CD8-positive, alpha-beta T cell (primary cell): ENCODE measurements at regions of chr15 and their contacts with region 1.

Region 1: GRCh38 chr15:59741274-59741906 is 52.3 kb upstream of the BNIP2 start:
- DNase-seq: peak in 2 of 9 experiments; percentile 17 to 33
- ATAC-seq: no peak
- H3K4me3 ChIP-seq: no peak overlapping the region
- H3K4me3 Mint-ChIP-seq: no peak overlapping the region
- H3K27ac ChIP-seq: no peak overlapping the region
- H3K27ac Mint-ChIP-seq: no peak overlapping the region
- H3K4me1 ChIP-seq: no peaks in the 10 kb centered on the region
- H3K4me1 Mint-ChIP-seq: no peaks in the 10 kb centered on the region
- H3K27me3 ChIP-seq: no peaks in the 10 kb centered on the region
- H3K27me3 Mint-ChIP-seq: peaks cover 10% of the 10 kb centered on the region
- CTCF ChIP-seq: no peak

Region 2: DNA sequence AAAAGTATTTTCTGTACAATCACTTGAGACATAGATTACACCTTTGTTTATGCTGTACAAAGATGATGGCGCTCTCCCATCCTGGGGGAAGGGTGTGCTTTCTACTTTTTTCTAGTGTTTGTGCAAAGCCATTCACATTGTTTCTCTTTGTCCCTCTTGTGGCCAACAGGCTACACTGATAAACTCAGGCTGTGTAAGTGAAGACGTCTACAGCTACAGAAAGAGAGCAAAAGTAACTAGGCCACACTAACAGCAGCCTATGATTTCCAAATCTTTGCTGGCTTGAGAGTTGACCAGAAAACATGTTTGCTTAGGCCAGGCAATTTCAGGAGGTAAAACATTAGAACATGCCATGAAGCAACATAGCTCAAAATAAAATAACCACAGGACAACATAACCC is 337.8 kb after region 1 on chr15:
- CTCF ChIA-PET with region 1: no interaction called
- POLR2A ChIA-PET with region 1: no interaction called
- intact Hi-C with region 1: no loop called
- DNase-seq: no peak
- ATAC-seq: no peak
- H3K4me3 ChIP-seq: no peak overlapping the region
- H3K4me3 Mint-ChIP-seq: no peak overlapping the region
- H3K27ac ChIP-seq: no peak overlapping the region
- H3K27ac Mint-ChIP-seq: no peak overlapping the region
- H3K4me1 ChIP-seq: peaks cover 5% of the 10 kb centered on the region
- H3K4me1 Mint-ChIP-seq: peaks cover 23% of the 10 kb centered on the region
- H3K27me3 ChIP-seq: no peaks in the 10 kb centered on the region
- H3K27me3 Mint-ChIP-seq: peaks cover 10% of the 10 kb centered on the region
- CTCF ChIP-seq: no peak

Region 3: GRCh38 chr15:60179786-60180391 is 438.5 kb after region 1 on chr15:
- CTCF ChIA-PET with region 1: interaction called, 10 read pairs
- POLR2A ChIA-PET with region 1: no interaction called
- intact Hi-C with region 1: no loop called
- DNase-seq: peak in 5 of 9 experiments; percentile 3 to 70 (median 34)
- ATAC-seq: peak; percentile 63
- H3K4me3 ChIP-seq: no peak overlapping the region
- H3K4me3 Mint-ChIP-seq: no peak overlapping the region
- H3K27ac ChIP-seq: no peak overlapping the region
- H3K27ac Mint-ChIP-seq: no peak overlapping the region
- H3K4me1 ChIP-seq: no peaks in the 10 kb centered on the region
- H3K4me1 Mint-ChIP-seq: no peaks in the 10 kb centered on the region
- H3K27me3 ChIP-seq: no peaks in the 10 kb centered on the region
- H3K27me3 Mint-ChIP-seq: peaks cover 9% of the 10 kb centered on the region
- CTCF ChIP-seq: peak; percentile 94

Region 4: GRCh38 chr15:60326824-60327654 is 585.6 kb after region 1 on chr15:
- CTCF ChIA-PET with region 1: interaction called, 15 read pairs
- POLR2A ChIA-PET with region 1: no interaction called
- intact Hi-C with region 1: no loop called
- DNase-seq: peak in 5 of 9 experiments; percentile 8 to 72 (median 32)
- ATAC-seq: peak; percentile 40
- H3K4me3 ChIP-seq: no peak overlapping the region
- H3K4me3 Mint-ChIP-seq: no peak overlapping the region
- H3K27ac ChIP-seq: no peak overlapping the region
- H3K27ac Mint-ChIP-seq: no peak overlapping the region
- H3K4me1 ChIP-seq: no peaks in the 10 kb centered on the region
- H3K4me1 Mint-ChIP-seq: peaks cover 2% of the 10 kb centered on the region
- H3K27me3 ChIP-seq: peaks cover 0 to 5% of the 10 kb centered on the region in 2 experiments
- H3K27me3 Mint-ChIP-seq: peaks cover 34% of the 10 kb centered on the region
- CTCF ChIP-seq: peak; percentile 73